ENCODE measurements at regions of chr4 and their contacts with region 1.

Region 1: DNA sequence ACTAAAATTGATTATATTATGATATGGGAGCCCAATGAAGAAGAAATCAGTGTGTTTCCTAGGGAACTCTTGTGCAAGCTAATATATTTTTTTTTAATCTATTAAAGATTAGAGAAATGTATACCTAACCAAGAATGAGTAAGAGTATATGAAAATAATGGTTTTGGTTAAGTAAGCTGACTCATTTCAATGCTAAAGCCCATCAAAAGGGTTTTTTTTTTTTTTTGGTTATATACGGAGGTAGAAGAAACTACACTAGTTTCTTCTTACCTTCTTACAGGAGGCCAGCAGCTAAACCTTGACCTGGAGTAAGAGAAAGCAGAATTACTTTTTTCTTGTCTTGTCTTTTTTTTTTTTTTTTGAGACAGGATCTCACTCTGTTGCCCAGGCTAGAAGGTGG is 27.5 kb downstream of the RUFY3 start:
- DNase-seq: no peak
- H3K4me3 ChIP-seq: no peak overlapping the region
- H3K27ac ChIP-seq: no peak overlapping the region
- H3K4me1 ChIP-seq: peaks cover 0 to 10% (median 0%) of the 10 kb centered on the region in 4 donors
- H3K27me3 ChIP-seq: no peaks in the 10 kb centered on the region
- CTCF ChIP-seq: no peak
- EP300 ChIP-seq: no peak
- POLR2A ChIP-seq: no peak

Region 2: DNA sequence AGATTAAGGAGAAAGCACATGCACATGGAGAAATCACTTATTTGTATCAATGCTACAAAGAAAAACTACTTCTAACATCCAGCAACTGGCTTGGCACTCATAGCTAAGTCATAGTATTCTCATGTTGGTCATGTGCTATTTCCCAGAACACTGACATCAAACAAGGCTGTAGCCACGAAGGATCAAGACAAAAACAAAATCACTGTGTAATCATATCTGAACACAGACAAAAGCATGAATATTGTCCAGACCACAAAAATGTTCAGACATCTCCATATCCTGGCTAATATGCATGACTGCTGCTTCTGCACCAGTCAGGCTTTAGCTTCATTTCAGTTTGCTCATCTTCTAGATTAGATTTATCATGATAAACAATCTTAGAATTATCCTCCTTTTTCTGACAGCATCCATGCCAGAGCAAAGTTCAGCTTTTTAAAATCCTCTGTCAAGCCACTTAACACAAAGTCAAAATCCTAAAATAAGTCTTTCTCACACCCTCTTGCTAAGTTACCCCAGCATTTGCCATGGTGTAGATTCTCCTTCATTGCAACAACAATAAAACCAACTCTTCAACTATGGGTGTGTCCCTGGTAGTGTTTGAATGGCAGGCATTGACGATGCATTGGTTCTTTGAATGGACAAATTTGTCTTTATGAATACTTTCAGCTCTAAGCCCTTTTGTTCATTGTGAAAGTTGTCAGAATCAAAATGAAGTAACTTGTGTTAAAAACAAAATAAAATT is 1243.4 kb after region 1 on chr4:
- in situ Hi-C with region 1: no loop called
- intact Hi-C with region 1: loop called (anchors 5 kb)
- DNase-seq: no peak
- H3K4me3 ChIP-seq: no peak overlapping the region
- H3K27ac ChIP-seq: no peak overlapping the region
- H3K4me1 ChIP-seq: no peaks in the 10 kb centered on the region
- H3K27me3 ChIP-seq: no peaks in the 10 kb centered on the region
- CTCF ChIP-seq: no peak
- EP300 ChIP-seq: no peak
- POLR2A ChIP-seq: no peak